ENCODE measurements at regions of chr11 and their contacts with region 1.

Region 1: DNA sequence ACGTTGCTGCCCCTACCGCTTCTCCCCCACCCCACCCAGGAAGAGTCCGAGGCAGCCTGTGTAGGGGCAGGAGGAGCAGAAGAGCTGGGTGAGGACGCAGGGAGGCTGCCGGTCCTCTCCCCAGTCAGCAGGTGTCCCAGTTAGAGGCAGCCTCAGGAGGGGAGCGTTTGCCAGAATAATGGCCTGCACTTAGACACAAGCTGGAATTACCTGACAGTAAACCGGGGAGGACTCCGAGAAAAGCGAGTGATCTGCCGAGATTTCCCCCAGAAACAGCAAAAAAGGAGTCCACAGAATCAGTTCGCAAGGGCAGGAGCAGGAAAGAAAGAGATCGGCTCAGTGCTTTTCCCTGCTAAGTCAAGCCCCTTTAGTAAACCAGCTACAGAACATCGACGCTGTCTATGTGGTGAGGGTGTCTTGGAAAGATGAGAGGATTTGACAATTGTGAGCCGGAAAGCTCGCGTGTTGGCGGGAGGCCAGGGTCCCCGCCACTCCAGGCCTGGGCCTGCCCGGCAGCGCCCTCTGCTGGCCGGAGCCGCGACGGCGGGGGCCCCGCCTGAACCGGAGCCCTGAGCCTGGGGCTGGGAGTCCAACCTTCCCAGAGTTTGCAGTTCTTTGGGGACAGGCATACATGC is 17.7 kb upstream of the THRSP start:
- DNase-seq: peak; percentile 94
- H3K4me3 ChIP-seq: peak overlapping the region; percentile 42 to 64
- H3K27ac ChIP-seq: peak overlapping the region; percentile 48 to 89; a peak in 3 of 4 replicates
- H3K4me1 ChIP-seq: peaks cover 11 to 13% of the 10 kb centered on the region in 2 experiments; a peak in 2 of 4 replicates
- H3K27me3 ChIP-seq: no peaks in the 10 kb centered on the region
- CTCF ChIP-seq: peak; percentile 98
- EP300 ChIP-seq: no peak
- RAD21 ChIP-seq: peak; percentile 97

Region 2: GRCh38 chr11:77994412-77995362 is 51.3 kb before region 1 on chr11 and contains the start of gene INTS4:
- CTCF ChIA-PET with region 1: interaction called, 30 read pairs
- POLR2A ChIA-PET with region 1: interaction called, 10 read pairs
- DNase-seq: peak; percentile 88
- H3K4me3 ChIP-seq: peak within 1 kb of the TSS; percentile 76 to 83
- H3K27ac ChIP-seq: peak within 1 kb of the TSS; percentile 85 to 89
- H3K4me1 ChIP-seq: peaks cover 11 to 14% of the 10 kb centered on the region in 2 experiments; a peak in 3 of 4 replicates
- H3K27me3 ChIP-seq: no peaks in the 10 kb centered on the region
- CTCF ChIP-seq: no peak
- EP300 ChIP-seq: peak; percentile 6 to 47; a peak in 3 of 4 replicates
- RAD21 ChIP-seq: peak; percentile 9
- polyA plus RNA-seq, gene INTS4: 23.0 and 30.0 TPM in 2 replicates

Region 3: GRCh38 chr11:78000193-78000592 is 45.8 kb before region 1 on chr11:
- CTCF ChIA-PET with region 1: interaction called, 30 read pairs
- POLR2A ChIA-PET with region 1: interaction called, 10 read pairs
- DNase-seq: peak; percentile 67
- H3K4me3 ChIP-seq: no peak overlapping the region; a peak in 1 of 4 replicates
- H3K27ac ChIP-seq: no peak overlapping the region
- H3K4me1 ChIP-seq: peaks cover 3 to 5% of the 10 kb centered on the region in 2 experiments; a peak in 2 of 4 replicates
- H3K27me3 ChIP-seq: no peaks in the 10 kb centered on the region
- CTCF ChIP-seq: peak; percentile 73
- EP300 ChIP-seq: no peak
- RAD21 ChIP-seq: peak; percentile 68

Region 4: DNA sequence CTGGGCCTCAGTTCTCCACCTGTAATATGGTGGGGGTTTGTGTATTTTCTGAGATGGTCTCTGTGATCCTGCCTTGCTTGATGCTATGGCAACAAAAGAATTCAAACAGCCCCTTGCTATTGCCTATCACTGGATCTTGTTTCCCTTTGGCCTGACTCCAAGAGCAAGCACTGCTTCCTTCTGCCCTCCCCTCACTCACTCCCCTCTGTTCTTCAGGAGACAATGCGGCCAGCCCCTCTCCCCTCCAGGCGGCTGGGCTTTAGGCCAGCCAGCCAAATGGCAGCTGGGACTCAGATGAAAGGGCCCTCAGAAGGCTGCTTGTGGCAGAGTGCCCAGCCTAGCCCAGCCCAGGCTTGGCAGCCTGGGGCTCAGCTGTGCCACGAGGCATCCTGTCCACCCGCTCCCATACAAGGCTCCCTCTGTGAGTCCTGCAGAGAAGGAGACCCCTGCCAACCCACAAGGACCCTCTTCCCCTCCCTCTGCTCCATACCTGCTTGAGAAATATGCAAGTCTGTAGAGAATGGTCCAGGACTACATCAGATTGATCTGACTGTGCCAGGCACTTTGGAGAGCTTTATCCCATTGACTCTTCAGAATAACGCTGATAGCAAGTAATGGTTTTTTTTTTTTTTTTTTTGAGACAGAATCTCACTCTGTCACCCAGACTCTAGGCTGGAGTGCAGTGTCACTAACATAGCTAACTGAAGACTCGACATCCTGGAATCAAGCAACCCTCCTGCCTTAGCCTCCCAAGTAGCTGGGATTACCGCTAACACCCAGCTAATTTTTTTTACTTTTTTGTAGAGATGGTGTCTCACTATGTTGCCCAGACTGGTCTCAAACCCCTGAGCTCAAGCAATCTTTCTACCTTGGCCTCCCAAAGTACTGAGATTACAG is 15.3 kb before region 1 on chr11:
- CTCF ChIA-PET with region 1: interaction called, 26 read pairs
- POLR2A ChIA-PET with region 1: interaction called, 9 read pairs
- DNase-seq: peak; percentile 91
- H3K4me3 ChIP-seq: no peak overlapping the region
- H3K27ac ChIP-seq: peak overlapping the region; percentile 70 to 90
- H3K4me1 ChIP-seq: peaks cover 20 to 24% of the 10 kb centered on the region in 2 experiments; a peak in 3 of 4 replicates
- H3K27me3 ChIP-seq: no peaks in the 10 kb centered on the region
- CTCF ChIP-seq: no peak
- EP300 ChIP-seq: peak; percentile 61 to 68; a peak in 2 of 4 replicates
- RAD21 ChIP-seq: no peak; the same call in 1 of the 2 replicates

Region 5: DNA sequence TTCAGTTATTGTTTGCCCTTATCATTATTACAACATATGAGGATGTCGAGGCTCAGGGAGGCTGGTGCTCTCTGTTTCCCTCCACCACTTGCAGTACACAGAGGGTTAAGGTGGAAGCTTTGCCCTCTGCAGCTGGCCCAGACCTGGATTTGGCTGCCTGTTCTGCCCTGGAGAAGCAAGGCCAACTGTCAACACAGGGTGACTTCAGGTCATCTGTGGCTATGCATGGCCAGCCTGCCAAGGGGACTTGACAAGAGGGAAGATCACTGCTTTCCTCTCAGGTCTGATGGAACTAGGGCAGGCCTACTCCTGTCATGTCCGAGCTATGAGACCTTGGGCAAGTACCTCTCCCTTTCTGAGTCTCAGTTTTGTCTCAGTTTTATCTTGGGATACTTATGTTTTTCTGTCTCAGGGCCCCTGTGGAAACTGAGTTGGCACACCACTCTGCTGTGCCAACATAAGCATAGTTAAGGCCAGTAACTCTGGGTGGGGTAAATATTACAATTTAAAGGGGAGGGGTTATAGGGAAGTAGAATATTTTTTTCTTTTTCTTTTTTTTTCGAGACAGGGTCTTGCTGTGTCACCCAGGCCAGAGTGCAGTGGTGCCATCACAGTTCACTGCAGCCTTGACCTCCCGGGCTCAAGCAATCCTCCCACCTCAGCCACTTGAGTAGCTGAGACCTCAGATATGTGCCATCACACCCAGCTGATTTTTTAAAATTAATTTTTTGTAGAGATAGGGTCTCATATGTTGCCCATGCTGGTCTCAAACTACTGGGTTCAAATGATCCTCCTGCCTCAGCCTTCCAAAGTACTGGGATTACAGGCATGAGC is 15.3 kb after region 1 on chr11:
- CTCF ChIA-PET with region 1: interaction called, 28 read pairs
- POLR2A ChIA-PET with region 1: no interaction called
- DNase-seq: peak; percentile 41
- H3K4me3 ChIP-seq: no peak overlapping the region
- H3K27ac ChIP-seq: peak overlapping the region in 1 of 2 experiments; percentile 24; a peak in 1 of 4 replicates
- H3K4me1 ChIP-seq: peaks cover 3 to 4% of the 10 kb centered on the region in 2 experiments; a peak in 2 of 4 replicates
- H3K27me3 ChIP-seq: no peaks in the 10 kb centered on the region
- CTCF ChIP-seq: no peak
- EP300 ChIP-seq: no peak
- RAD21 ChIP-seq: no peak

Region 6: GRCh38 chr11:78094250-78094649 is 48.3 kb after region 1 on chr11:
- CTCF ChIA-PET with region 1: no interaction called
- POLR2A ChIA-PET with region 1: no interaction called
- DNase-seq: no peak
- H3K4me3 ChIP-seq: no peak overlapping the region
- H3K27ac ChIP-seq: no peak overlapping the region
- H3K4me1 ChIP-seq: no peaks in the 10 kb centered on the region
- H3K27me3 ChIP-seq: no peaks in the 10 kb centered on the region
- CTCF ChIP-seq: no peak
- EP300 ChIP-seq: no peak
- RAD21 ChIP-seq: no peak

Region 7: GRCh38 chr11:78228467-78228866 is 182.5 kb after region 1 on chr11:
- CTCF ChIA-PET with region 1: no interaction called
- POLR2A ChIA-PET with region 1: no interaction called
- DNase-seq: peak; percentile 72
- H3K4me3 ChIP-seq: no peak overlapping the region
- H3K27ac ChIP-seq: peak overlapping the region in 1 of 2 experiments; percentile 19; a peak in 2 of 4 replicates
- H3K4me1 ChIP-seq: peaks cover 0 to 21% of the 10 kb centered on the region in 2 experiments; a peak in 2 of 4 replicates
- H3K27me3 ChIP-seq: no peaks in the 10 kb centered on the region
- CTCF ChIP-seq: peak; percentile 60
- EP300 ChIP-seq: no peak
- RAD21 ChIP-seq: peak; percentile 92

Region 8: DNA sequence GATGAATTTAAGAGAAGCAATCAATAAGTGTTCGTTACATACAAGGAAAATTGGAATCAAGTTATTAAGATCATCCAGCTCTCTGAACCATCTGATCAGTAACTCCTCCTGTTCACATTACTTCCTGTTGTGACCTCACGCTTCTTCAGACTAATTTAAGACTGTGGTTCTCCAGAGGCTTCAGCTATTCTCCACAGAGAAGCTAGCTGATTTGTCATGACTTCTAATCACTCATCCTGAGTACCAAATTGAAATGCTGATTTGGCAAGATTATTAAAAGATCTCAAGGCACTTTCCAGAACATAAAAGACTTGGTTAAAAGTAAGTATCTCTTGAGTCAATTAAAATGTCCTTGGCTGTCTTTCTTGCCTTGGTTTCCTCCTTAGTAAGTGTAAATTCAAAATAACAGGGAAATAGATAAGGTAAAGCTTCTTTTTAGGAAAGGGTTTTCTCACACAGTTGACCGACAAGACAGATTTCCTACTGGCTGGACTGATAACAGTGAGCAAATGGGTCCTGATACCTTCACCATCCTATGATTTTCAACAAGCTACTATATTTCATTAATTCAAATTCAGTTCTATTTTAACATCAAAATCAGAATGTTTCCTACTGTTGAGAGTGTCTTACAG is 333.2 kb after region 1 on chr11:
- CTCF ChIA-PET with region 1: no interaction called
- POLR2A ChIA-PET with region 1: no interaction called
- DNase-seq: no peak
- H3K4me3 ChIP-seq: no peak overlapping the region
- H3K27ac ChIP-seq: no peak overlapping the region; a peak in 1 of 4 replicates
- H3K4me1 ChIP-seq: peaks cover 5 to 10% of the 10 kb centered on the region in 2 experiments; a peak in 3 of 4 replicates
- H3K27me3 ChIP-seq: no peaks in the 10 kb centered on the region
- CTCF ChIP-seq: no peak
- EP300 ChIP-seq: no peak
- RAD21 ChIP-seq: no peak

Measured in SK-N-SH (cell line).